Activated CD4-positive, alpha-beta T cell treated with anti-CD3 and anti-CD28 coated beads, Interleukin-2, amount 10 ng/mL, durations not matched to agents 24 days and 14 days (primary cell): ENCODE measurements at regions of chr14 and their contacts with region 1.

Region 1: GRCh38 chr14:66070509-66071319 is 415.5 kb upstream of the CCDC196 start:
- DNase-seq: peak; percentile 92
- H3K4me3 Mint-ChIP-seq: no peak overlapping the region
- H3K27ac Mint-ChIP-seq: no peak overlapping the region
- H3K4me1 Mint-ChIP-seq: peaks cover 5% of the 10 kb centered on the region
- H3K27me3 Mint-ChIP-seq: peaks cover 9% of the 10 kb centered on the region

Region 2: DNA sequence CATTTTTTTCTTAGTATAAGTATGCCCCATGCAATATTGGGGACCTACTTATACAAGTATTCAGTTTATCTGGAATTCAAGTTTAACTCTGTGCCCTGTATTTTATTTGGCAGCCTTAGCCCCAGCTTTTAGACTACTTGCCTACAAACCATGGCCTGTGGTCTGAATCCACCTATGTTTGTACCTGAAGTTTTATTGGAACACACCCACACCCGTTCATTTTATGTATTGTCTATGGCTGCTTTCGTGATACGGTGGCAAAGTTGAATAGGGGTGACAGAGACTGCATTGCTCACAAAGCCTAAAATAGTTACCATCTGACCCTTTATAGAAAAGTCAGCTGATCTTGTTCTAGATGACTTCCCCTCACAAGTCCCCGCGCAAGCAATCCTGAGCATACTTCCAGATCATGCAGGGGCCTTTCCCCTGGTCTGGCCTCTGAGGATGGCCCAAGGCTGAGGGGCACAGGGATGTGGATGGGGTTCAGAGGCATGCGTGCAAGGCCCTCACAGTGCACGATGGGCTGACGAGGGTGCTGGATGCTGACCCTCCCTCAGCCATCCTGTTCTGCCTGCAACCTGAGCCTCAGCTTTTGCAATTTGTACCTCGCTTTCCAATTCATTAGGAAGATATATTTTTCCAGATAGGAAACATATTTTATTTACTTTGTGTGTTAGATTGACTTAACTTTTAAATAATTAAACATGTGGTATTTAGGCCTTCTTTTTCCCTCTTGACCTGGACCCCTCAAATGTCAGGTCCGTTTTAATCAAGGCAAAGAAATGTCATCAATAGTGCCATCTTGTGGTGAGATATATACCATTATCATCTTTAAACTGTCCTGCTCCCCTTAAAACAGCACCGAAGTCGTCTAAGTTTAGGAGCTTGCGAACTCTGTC is 111.8 kb before region 1 on chr14:
- intact Hi-C with region 1: loop called (anchors 5 kb)
- DNase-seq: peak; percentile 63
- H3K4me3 Mint-ChIP-seq: no peak overlapping the region
- H3K27ac Mint-ChIP-seq: no peak overlapping the region
- H3K4me1 Mint-ChIP-seq: peaks cover 33% of the 10 kb centered on the region
- H3K27me3 Mint-ChIP-seq: peaks cover 19% of the 10 kb centered on the region

Region 3: GRCh38 chr14:66444271-66444927 is 373.7 kb after region 1 on chr14:
- intact Hi-C with region 1: no loop called
- DNase-seq: no peak
- H3K4me3 Mint-ChIP-seq: no peak overlapping the region
- H3K27ac Mint-ChIP-seq: no peak overlapping the region
- H3K4me1 Mint-ChIP-seq: no peaks in the 10 kb centered on the region
- H3K27me3 Mint-ChIP-seq: no peaks in the 10 kb centered on the region

Region 4: DNA sequence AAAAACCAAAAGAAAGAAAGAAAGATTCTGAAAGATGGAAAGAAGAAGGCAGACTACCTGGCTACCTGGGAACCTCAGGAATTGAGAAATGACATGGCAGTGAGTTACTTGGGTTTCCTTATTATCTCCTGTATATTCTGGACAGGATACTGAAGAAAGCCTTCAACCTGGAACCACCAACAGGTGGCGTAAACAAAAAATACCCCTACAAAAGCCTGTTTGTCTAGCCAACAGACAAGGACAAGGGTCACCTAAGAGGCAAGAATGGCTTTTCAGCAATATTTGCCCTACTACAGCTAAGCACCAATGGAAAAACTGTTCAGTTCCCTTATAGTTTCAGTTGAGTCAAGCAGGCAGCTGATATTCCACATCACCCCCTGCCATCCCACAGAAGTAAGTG is 712.1 kb after region 1 on chr14:
- intact Hi-C with region 1: no loop called
- DNase-seq: no peak
- H3K4me3 Mint-ChIP-seq: no peak overlapping the region
- H3K27ac Mint-ChIP-seq: no peak overlapping the region
- H3K4me1 Mint-ChIP-seq: no peaks in the 10 kb centered on the region
- H3K27me3 Mint-ChIP-seq: no peaks in the 10 kb centered on the region